ENCODE measurements at regions of chr16 and their contacts with region 1.

Region 1: DNA sequence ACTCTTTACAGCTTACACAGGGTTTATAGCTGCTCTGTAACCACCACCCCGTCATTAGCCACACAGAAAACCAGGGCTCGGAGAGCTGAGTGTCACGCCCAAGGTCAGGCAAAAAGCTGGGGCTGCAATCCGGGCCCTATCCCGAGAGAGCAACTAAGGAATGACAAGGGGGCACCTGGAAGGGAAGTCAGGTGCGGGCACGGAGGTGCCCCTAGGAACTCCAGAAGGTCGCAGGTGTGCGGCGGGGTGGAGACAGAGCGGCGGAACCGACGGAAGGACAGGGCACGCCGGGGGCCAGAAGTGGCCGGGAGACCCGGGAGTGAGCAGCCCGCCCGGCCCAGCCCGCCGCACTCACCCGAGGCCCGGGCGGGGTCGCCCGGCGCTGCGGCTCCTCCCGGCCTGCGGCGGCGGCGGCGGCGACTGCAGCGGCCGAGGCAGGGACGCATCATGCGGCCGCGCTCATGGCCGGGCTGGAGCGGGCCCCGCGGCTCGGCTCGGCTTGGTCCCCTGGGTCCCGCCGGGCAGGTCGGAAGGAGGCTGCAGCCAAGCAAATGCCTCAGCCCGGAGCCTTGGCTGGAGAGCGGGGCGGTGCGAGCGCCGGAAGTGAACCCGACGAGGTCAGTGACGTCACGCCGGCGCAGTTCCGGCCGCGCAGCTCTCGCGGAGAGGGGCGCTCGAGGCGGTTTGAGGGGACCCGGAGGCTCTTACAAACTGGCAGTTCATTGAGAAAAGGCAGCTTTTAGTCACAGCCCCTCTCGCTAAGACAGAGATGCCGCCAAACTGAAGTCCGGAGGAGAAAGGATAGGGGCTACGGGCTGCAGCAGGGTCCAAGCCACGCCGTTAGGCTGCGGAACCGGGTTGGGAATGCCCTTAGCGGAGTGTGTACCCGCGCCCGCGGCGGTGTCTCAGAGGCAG is at the start of gene ZDHHC7:
- DNase-seq: peak; percentile 80
- H3K4me3 Mint-ChIP-seq: peak within 1 kb of the TSS; percentile 98
- H3K27ac Mint-ChIP-seq: peak within 1 kb of the TSS; percentile 97
- H3K4me1 Mint-ChIP-seq: peaks cover 27% of the 10 kb centered on the region
- H3K27me3 Mint-ChIP-seq: peaks cover 5% of the 10 kb centered on the region
- total RNA-seq, gene ZDHHC7: 29.0 and 30.6 TPM in 2 replicates

Region 2: GRCh38 chr16:84897911-84898377 is 113.2 kb before region 1 on chr16:
- intact Hi-C with region 1: no loop called
- DNase-seq: no peak
- H3K4me3 Mint-ChIP-seq: no peak overlapping the region
- H3K27ac Mint-ChIP-seq: no peak overlapping the region
- H3K4me1 Mint-ChIP-seq: peaks cover 5% of the 10 kb centered on the region
- H3K27me3 Mint-ChIP-seq: peaks cover 4% of the 10 kb centered on the region

Region 3: GRCh38 chr16:84970447-84971127 is 40.6 kb before region 1 on chr16:
- intact Hi-C with region 1: no loop called
- DNase-seq: peak; percentile 62
- H3K4me3 Mint-ChIP-seq: no peak overlapping the region
- H3K27ac Mint-ChIP-seq: no peak overlapping the region
- H3K4me1 Mint-ChIP-seq: peaks cover 6% of the 10 kb centered on the region
- H3K27me3 Mint-ChIP-seq: peaks cover 2% of the 10 kb centered on the region

Region 4: GRCh38 chr16:85055503-85056210 is 44.5 kb after region 1 on chr16:
- intact Hi-C with region 1: loop called (anchors 1 kb)
- DNase-seq: peak; percentile 75
- H3K4me3 Mint-ChIP-seq: peak overlapping the region; percentile 60
- H3K27ac Mint-ChIP-seq: peak overlapping the region; percentile 84
- H3K4me1 Mint-ChIP-seq: peaks cover 31% of the 10 kb centered on the region
- H3K27me3 Mint-ChIP-seq: peaks cover 10% of the 10 kb centered on the region

Region 5: DNA sequence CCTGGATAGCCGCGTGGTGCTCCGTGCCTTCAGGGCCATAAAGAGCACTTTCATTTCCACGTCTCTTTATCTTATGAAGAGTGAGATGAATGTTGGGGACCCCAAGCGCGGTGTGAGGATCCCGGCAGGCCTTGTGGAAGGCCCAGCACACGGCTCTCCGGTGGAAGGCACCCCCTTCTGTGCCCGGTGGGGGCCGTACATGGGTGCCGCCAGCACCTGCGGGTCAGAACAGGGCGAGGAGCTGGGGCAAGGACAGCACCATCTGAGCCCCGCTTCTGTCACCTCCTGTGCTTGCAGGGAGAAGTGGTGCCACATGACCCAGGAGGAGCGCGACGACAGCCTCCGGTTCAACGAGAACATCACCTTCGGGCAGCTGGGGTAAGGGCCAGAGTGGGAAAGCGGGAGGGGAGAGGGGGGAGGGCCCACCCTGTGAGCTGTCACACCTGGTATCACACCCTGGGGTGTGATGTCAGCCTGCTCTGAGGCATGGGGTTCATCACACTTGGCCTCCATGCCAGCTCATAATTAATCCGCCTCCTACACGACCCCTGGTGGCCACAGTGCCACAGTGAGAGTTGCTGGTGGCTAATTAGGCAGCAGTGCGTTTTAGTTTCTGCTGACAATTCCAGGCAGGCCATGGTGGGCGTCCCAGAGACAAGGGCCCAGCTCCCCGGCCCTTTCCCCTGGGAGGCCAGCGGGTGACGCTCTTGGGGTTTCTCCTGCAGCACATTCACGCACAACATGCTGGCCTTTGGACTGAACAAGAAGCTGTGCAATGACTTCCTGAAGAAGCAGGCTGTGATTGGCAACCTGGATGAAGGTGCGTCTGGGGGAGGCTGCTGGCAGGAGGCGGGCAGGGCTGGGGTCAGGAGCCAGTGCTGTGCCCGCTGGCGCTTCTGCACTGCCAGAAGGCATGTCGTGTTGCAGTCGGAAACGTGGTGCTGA is 75.4 kb after region 1 on chr16:
- intact Hi-C with region 1: loop called (anchors 1 kb)
- DNase-seq: peak; percentile 64
- H3K4me3 Mint-ChIP-seq: no peak overlapping the region
- H3K27ac Mint-ChIP-seq: no peak overlapping the region
- H3K4me1 Mint-ChIP-seq: peaks cover 7% of the 10 kb centered on the region
- H3K27me3 Mint-ChIP-seq: no peaks in the 10 kb centered on the region

Region 6: GRCh38 chr16:85799497-85800337 is 788.5 kb after region 1 on chr16 and contains the starts of genes COX4I1 and EMC8:
- intact Hi-C with region 1: loop called (anchors 5 kb)
- DNase-seq: peak; percentile 93
- H3K4me3 Mint-ChIP-seq: peak within 1 kb of the TSS; percentile 92
- H3K27ac Mint-ChIP-seq: peak within 1 kb of the TSS; percentile 96
- H3K4me1 Mint-ChIP-seq: peaks cover 57% of the 10 kb centered on the region
- H3K27me3 Mint-ChIP-seq: no peaks in the 10 kb centered on the region
- total RNA-seq, gene COX4I1: 544 and 558 TPM in 2 replicates
- total RNA-seq, gene EMC8: 49.5 and 51.1 TPM in 2 replicates

Measured in activated T-helper 1 cell treated with anti-CD3 and anti-CD28 coated beads, Interleukin-12 subunit alpha, Interleukin-12 subunit beta, Interleukin-2, Interleukin-4 antibody, amounts not matched to agents 30 ng/mL and 10 ng/mL and 1 ng/mL, durations not matched to agents 14 hours and 24 hours and 36 hours (primary cell).